Activated naive CD4-positive, alpha-beta T cell treated with anti-CD3 and anti-CD28 coated beads for 36 hours (primary cell): ENCODE measurements at regions of chr6 and their contacts with region 1.

Region 1: GRCh38 chr6:26234421-26235296 is 130.3 kb upstream of the BTN3A2 start:
- DNase-seq: peak; percentile 90
- H3K4me3 Mint-ChIP-seq: peak overlapping the region; percentile 83
- H3K27ac Mint-ChIP-seq: peak overlapping the region; percentile 100
- H3K4me1 Mint-ChIP-seq: peaks cover 28% of the 10 kb centered on the region
- H3K27me3 Mint-ChIP-seq: peaks cover 3% of the 10 kb centered on the region

Region 2: GRCh38 chr6:26183581-26184366 is 50.9 kb before region 1 on chr6:
- CTCF ChIA-PET with region 1: interaction called, 3 read pairs
- intact Hi-C with region 1: loop called (anchors 2 kb)
- DNase-seq: peak; percentile 73
- H3K4me3 Mint-ChIP-seq: peak overlapping the region; percentile 86
- H3K27ac Mint-ChIP-seq: peak overlapping the region; percentile 89
- H3K4me1 Mint-ChIP-seq: peaks cover 30% of the 10 kb centered on the region
- H3K27me3 Mint-ChIP-seq: no peaks in the 10 kb centered on the region

Region 3: DNA sequence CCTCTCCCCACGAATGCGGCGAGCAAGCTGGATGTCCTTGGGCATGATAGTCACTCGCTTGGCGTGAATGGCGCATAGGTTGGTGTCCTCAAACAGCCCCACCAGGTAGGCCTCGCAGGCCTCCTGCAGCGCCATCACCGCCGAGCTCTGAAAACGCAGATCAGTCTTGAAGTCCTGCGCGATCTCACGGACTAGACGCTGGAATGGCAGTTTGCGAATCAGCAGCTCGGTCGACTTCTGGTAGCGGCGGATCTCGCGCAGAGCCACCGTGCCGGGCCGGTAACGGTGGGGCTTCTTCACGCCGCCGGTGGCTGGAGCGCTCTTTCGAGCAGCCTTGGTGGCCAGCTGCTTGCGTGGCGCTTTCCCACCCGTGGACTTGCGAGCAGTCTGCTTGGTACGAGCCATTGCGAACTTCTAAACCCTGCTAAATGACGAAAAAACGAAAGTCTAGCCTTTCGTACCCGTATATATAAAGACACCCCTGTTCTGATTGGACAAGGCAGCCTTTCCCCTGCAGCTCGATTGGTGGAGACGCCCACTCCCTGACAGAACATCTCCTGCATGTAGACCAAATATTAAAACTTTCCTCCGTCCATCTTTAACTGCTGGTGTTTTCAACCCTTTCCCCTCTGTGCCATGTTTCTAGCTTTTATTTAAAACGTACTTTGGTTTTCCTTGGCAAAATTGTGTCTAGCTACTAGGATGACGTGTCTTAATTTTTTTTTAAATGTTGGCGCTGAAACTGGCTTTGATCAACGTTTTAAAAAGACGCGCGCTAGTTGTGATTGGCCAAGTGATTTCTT is 37.6 kb before region 1 on chr6:
- CTCF ChIA-PET with region 1: interaction called, 3 read pairs
- intact Hi-C with region 1: loop called (anchors 1 kb)
- DNase-seq: peak; percentile 86
- H3K4me3 Mint-ChIP-seq: peak overlapping the region; percentile 96
- H3K27ac Mint-ChIP-seq: peak overlapping the region; percentile 99
- H3K4me1 Mint-ChIP-seq: peaks cover 36% of the 10 kb centered on the region
- H3K27me3 Mint-ChIP-seq: peaks cover 5% of the 10 kb centered on the region

Region 4: DNA sequence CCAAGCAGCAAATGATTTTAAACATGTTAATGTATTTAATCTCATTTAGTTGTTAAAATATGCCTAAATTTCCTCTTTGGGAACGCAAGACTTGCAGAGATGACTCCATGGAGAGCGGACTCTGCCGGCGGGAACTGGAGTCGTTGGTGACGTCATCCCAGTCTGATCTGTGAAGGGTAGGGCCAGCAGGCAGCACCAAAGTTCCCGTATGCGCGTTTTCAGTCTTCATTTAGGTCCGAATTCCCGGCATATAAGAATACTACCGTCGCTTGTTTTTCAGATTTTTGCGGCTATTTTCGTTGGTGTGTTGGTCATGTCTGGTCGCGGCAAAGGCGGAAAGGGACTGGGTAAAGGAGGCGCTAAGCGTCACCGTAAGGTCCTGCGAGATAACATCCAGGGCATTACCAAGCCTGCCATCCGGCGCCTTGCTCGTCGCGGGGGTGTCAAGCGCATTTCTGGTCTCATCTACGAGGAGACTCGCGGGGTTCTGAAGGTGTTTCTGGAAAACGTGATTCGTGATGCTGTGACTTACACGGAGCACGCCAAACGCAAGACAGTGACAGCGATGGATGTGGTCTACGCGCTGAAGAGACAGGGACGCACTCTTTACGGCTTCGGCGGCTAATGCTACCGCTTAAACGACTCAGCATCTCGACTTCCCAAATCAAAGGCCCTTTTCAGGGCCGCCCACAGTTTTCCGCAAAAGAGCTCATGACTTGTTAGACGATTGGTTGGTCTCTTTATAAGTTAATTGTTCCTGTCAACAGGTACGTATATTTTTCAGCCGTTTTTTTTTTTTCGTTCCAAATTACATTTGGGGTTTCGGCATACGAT is 30.1 kb before region 1 on chr6:
- CTCF ChIA-PET with region 1: no interaction called
- intact Hi-C with region 1: loop called (anchors 1 kb)
- DNase-seq: peak; percentile 94
- H3K4me3 Mint-ChIP-seq: no peak overlapping the region
- H3K27ac Mint-ChIP-seq: no peak overlapping the region
- H3K4me1 Mint-ChIP-seq: peaks cover 20% of the 10 kb centered on the region
- H3K27me3 Mint-ChIP-seq: no peaks in the 10 kb centered on the region

Region 5: DNA sequence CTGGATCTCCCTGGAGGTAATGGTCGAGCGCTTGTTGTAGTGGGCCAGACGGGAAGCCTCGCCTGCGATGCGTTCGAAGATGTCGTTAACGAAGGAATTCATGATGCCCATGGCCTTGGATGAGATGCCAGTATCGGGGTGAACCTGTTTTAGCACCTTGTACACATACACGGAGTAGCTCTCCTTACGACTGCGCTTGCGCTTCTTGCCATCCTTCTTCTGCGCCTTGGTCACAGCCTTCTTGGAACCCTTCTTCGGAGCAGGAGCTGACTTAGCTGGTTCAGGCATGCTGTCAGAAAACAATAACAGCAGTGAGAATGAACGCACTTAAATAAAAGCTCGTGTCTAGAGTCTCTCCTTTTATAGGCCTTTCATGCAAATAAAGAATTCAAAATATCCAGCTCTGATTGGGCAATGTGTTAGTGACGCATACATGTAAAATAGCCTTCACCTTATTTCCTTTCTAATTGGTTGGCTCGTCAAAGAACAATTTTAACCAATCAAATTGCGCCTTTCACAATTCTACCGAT is 18.2 kb before region 1 on chr6:
- CTCF ChIA-PET with region 1: interaction called, 3 read pairs
- intact Hi-C with region 1: loop called (anchors 1 kb)
- DNase-seq: peak; percentile 85
- H3K4me3 Mint-ChIP-seq: no peak overlapping the region
- H3K27ac Mint-ChIP-seq: no peak overlapping the region
- H3K4me1 Mint-ChIP-seq: peaks cover 2% of the 10 kb centered on the region
- H3K27me3 Mint-ChIP-seq: no peaks in the 10 kb centered on the region

Region 6: GRCh38 chr6:26223650-26224546 is 10.8 kb before region 1 on chr6:
- CTCF ChIA-PET with region 1: interaction called, 3 read pairs
- intact Hi-C with region 1: loop called (anchors 1 kb)
- DNase-seq: peak; percentile 75
- H3K4me3 Mint-ChIP-seq: no peak overlapping the region
- H3K27ac Mint-ChIP-seq: no peak overlapping the region
- H3K4me1 Mint-ChIP-seq: peaks cover 7% of the 10 kb centered on the region
- H3K27me3 Mint-ChIP-seq: no peaks in the 10 kb centered on the region

Region 7: DNA sequence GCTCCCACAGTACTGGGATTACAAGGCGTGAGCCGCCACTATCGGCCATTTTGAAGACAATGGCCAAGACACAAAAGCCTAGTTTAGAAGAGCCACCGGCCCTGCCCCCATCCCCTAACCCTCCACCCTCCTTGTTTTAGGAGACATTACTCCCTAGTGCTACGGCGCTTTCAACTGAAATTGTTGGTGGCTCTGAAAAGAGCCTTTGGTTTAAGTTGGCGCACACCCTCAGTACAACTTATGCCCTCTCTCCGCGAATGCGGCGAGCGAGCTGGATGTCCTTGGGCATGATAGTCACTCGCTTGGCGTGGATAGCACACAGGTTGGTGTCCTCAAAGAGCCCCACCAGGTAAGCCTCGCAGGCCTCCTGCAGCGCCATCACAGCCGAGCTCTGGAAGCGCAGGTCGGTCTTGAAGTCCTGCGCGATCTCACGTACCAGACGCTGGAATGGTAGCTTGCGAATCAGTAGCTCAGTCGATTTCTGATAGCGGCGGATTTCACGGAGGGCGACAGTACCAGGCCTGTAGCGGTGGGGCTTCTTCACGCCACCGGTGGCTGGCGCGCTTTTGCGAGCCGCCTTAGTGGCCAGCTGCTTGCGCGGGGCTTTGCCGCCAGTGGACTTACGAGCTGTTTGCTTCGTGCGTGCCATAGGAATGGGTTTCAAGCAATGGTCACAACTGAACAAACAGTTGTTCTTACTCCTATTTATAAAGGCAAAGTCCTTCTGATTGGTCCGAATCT is 15.5 kb after region 1 on chr6:
- CTCF ChIA-PET with region 1: interaction called, 13 read pairs
- intact Hi-C with region 1: loop called (anchors 1 kb)
- DNase-seq: peak; percentile 82
- H3K4me3 Mint-ChIP-seq: peak overlapping the region; percentile 86
- H3K27ac Mint-ChIP-seq: peak overlapping the region; percentile 100
- H3K4me1 Mint-ChIP-seq: peaks cover 17% of the 10 kb centered on the region
- H3K27me3 Mint-ChIP-seq: no peaks in the 10 kb centered on the region